SK-N-SH (cell line): ENCODE measurements at regions of chr14 and their contacts with region 1.

Region 1: GRCh38 chr14:37874429-37875191 is 279.2 kb downstream of the TTC6 start:
- DNase-seq: peak; percentile 41
- H3K4me3 ChIP-seq: peak overlapping the region in 1 of 2 experiments; percentile 37; a peak in 1 of 4 replicates
- H3K27ac ChIP-seq: no peak overlapping the region
- H3K4me1 ChIP-seq: no peaks in the 10 kb centered on the region
- H3K27me3 ChIP-seq: no peaks in the 10 kb centered on the region
- CTCF ChIP-seq: peak; percentile 70
- EP300 ChIP-seq: no peak
- RAD21 ChIP-seq: peak; percentile 65

Region 2: GRCh38 chr14:37709419-37710195 is 165.0 kb before region 1 on chr14:
- CTCF ChIA-PET with region 1: interaction called, 11 read pairs
- POLR2A ChIA-PET with region 1: interaction called, 3 read pairs
- DNase-seq: no peak
- H3K4me3 ChIP-seq: no peak overlapping the region
- H3K27ac ChIP-seq: no peak overlapping the region
- H3K4me1 ChIP-seq: no peaks in the 10 kb centered on the region
- H3K27me3 ChIP-seq: no peaks in the 10 kb centered on the region
- CTCF ChIP-seq: peak; percentile 44
- EP300 ChIP-seq: no peak
- RAD21 ChIP-seq: peak; percentile 22; the same call in 1 of the 2 replicates